ENCODE measurements at regions of chr22 and their contacts with region 1.

Region 1: DNA sequence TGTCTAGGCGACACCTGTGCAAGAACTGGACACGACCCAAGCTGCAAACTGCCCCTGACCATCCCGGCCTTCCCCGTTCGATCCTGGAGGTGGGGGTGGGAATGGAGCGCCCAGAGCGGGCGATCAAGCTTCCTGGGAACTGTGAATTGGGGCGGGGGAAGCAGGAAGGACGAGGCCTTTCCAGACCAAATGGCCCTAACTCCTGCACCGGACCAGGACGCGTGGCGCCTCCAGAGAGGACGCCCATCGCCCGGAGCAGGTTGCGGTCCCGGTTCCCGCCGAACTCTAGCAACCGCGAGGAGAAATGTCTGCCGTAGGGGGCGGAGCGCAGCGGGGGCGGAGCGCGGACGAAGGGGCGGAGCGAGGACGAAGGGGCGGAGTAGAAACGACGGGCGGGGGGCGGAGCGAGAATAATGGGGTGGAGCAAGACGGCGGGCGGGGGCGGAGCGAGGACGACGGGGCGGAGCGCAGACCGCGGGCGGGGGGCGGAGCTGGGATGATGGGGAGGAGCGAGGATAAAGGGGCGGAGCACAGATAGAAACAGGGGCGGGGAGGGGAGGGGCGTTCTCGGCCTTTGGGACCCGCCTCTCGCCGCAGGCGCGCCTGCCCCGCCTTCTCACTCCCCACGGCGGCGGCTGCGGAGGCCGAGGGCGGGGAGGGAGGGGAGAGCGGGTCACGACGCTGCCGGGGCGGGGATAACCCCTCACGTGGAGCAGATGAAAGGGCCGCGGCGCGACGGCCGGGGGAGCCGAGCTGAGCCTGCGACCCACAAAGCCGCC is at the start of gene ZNRF3:
- DNase-seq: peak; percentile 86
- ATAC-seq: peak; percentile 79
- H3K4me3 ChIP-seq: peak within 1 kb of the TSS; percentile 97
- H3K27ac ChIP-seq: peak within 1 kb of the TSS; percentile 82
- H3K4me1 ChIP-seq: peaks cover 47% of the 10 kb centered on the region
- H3K27me3 ChIP-seq: no peaks in the 10 kb centered on the region; a peak in 1 of 5 replicates
- CTCF ChIP-seq: 0 out of 2 replicates have a peak, but pooled peaks have one; percentile 17
- EP300 ChIP-seq: peak in 1 of 2 experiments; percentile 47; a peak in 1 of 4 replicates
- POLR2A ChIP-seq: peak; percentile 61 to 88; a peak in 3 of 4 replicates
- RAD21 ChIP-seq: 0 out of 2 replicates have a peak, but pooled peaks have one; percentile 24
- total RNA-seq, gene ZNRF3: 17.6 and 36.7 TPM in 2 replicates

Region 2: DNA sequence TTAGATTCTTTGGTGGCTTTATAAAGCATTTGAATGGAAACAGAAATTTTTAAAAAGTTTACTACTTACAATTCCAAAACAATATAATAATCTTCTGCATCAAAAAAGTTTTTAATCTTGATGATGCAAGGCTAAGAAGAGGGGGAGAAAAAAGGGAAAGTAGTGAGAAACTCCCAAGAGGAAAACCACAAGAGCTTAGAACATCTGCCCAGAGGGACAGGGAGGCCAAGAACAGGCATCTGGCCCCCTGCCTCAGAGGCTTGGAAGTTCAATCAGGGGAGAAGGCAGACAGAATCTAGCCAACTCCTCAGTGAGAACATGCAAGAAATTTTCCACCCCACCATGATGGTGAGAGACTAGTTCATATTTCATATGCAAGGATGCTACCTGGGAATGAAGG is 179.6 kb before region 1 on chr22:
- CTCF ChIA-PET with region 1: no interaction called
- POLR2A ChIA-PET with region 1: no interaction called
- in situ Hi-C with region 1: no loop called
- intact Hi-C with region 1: no loop called
- DNase-seq: no peak
- ATAC-seq: no peak
- H3K4me3 ChIP-seq: no peak overlapping the region
- H3K27ac ChIP-seq: no peak overlapping the region
- H3K4me1 ChIP-seq: no peaks in the 10 kb centered on the region
- H3K27me3 ChIP-seq: no peaks in the 10 kb centered on the region
- CTCF ChIP-seq: no peak
- EP300 ChIP-seq: no peak
- POLR2A ChIP-seq: no peak
- RAD21 ChIP-seq: no peak

Region 3: GRCh38 chr22:28864878-28865596 is 18.0 kb before region 1 on chr22:
- CTCF ChIA-PET with region 1: no interaction called
- POLR2A ChIA-PET with region 1: interaction called, 9 read pairs
- in situ Hi-C with region 1: no loop called
- intact Hi-C with region 1: loop called (anchors 2 kb)
- DNase-seq: peak; percentile 97
- ATAC-seq: peak; percentile 92
- H3K4me3 ChIP-seq: peak overlapping the region; percentile 42 to 65 (median 42); a peak in 5 of 6 replicates
- H3K27ac ChIP-seq: peak overlapping the region; percentile 84
- H3K4me1 ChIP-seq: peaks cover 64% of the 10 kb centered on the region
- H3K27me3 ChIP-seq: no peaks in the 10 kb centered on the region
- CTCF ChIP-seq: peak; percentile 16; the same call in 1 of the 2 replicates
- EP300 ChIP-seq: peak in 1 of 2 experiments; percentile 95; a peak in 2 of 4 replicates
- POLR2A ChIP-seq: peak; percentile 64 to 87; a peak in 2 of 4 replicates
- RAD21 ChIP-seq: no peak

Region 4: DNA sequence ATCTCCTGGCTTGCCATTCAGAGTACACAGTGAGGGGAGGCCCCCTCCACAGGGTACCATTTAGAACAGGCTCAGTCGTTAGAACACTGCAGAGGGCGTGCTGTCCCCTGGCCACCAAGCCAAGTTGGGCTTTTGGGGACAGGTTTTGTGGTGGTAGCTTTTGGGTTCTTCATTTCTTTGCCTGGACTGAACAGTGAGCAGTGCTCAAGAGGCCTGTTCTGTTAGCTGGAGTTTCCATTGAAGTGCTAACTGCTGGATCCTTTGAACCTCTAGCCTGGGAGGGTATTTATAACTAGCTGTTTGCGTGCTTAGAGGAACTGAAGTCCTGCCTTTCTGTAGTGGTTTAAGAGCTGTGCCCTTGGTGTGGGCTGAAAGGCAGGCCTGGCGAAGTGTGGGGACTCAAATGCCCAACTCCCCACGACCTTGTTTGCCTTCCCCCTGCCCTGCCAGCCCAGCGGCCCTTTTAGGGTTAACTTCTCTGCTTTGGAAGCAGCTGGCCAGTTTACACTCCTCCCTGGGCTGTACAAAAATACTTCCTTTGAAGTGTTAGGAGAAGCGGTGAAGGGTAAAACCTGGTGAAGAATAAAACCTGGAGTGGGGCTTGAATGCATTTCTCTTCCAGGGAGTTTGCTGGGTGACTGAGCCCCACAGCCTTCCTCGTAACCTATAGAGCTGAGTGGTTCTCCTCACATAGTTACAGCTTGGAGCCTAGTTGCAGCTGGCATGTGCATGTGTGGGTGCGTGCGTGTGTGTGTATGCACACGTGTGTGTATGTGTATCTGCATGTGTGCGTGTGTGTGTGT is 34.9 kb after region 1 on chr22:
- CTCF ChIA-PET with region 1: no interaction called
- POLR2A ChIA-PET with region 1: interaction called, 15 read pairs
- in situ Hi-C with region 1: no loop called
- intact Hi-C with region 1: loop called (anchors 5 kb)
- DNase-seq: peak; percentile 86
- ATAC-seq: peak; percentile 72
- H3K4me3 ChIP-seq: peak overlapping the region in 1 of 3 experiments; percentile 44; a peak in 2 of 6 replicates
- H3K27ac ChIP-seq: peak overlapping the region; percentile 81
- H3K4me1 ChIP-seq: peaks cover 100% of the 10 kb centered on the region
- H3K27me3 ChIP-seq: no peaks in the 10 kb centered on the region
- CTCF ChIP-seq: peak; percentile 23; the same call in 1 of the 2 replicates
- EP300 ChIP-seq: peak in 1 of 2 experiments; percentile 91; a peak in 2 of 4 replicates
- POLR2A ChIP-seq: 0 out of 4 replicates have a peak, but pooled peaks of 1 of the 2 experiments have one; percentile 18
- RAD21 ChIP-seq: 0 out of 2 replicates have a peak, but pooled peaks have one; percentile 37

Region 5: DNA sequence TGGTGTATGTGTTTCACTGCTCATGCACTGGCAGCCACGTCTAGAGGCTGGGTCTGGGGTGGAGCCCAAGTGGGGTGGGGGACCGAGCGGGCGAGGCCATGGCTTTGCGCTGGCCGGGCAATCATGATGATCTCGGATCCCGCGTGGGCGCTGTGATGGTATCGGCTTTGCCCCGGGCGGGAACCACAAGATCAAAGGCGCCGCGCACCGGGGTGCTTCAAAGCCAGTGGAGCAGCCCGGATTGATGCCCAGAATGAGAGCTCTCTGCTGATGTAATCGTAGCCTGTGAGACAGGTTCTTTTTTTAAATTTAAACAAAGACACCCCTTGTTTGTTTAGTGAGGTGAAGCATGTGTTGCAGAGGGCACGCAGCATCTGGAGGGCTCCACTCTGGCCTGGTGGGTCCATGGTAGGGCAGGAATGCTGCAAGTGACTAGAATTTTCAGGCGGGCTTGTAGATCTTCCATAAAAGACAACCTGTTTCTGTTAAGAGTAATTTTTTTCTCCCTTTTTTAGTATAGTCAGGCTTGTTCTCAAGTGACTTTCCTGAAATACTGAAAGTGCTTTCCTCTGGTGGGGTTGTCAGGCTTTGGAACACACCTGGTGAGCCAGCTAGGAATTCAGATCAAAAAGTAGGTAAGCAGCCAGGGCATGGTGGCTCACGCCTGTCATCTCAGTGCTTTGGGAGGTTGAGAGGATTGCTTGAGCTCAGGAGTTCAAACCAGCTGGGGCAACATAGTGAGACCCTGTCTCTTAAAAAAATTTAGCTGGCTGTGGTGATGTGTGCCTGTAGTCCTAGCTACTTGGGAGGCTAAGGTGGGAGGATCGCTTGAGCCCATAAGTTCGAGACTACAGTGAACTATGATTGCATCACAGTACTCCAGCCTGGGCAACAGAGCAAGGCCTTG is 41.0 kb after region 1 on chr22:
- CTCF ChIA-PET with region 1: no interaction called
- POLR2A ChIA-PET with region 1: interaction called, 15 read pairs
- in situ Hi-C with region 1: no loop called
- intact Hi-C with region 1: loop called (anchors 5 kb)
- DNase-seq: peak; percentile 98
- ATAC-seq: peak; percentile 76
- H3K4me3 ChIP-seq: peak overlapping the region in 1 of 3 experiments; percentile 29; a peak in 2 of 6 replicates
- H3K27ac ChIP-seq: peak overlapping the region; percentile 96
- H3K4me1 ChIP-seq: peaks cover 99% of the 10 kb centered on the region
- H3K27me3 ChIP-seq: no peaks in the 10 kb centered on the region
- CTCF ChIP-seq: no peak
- EP300 ChIP-seq: peak; percentile 67 to 98; a peak in 3 of 4 replicates
- POLR2A ChIP-seq: no peak
- RAD21 ChIP-seq: peak; percentile 48; the same call in 1 of the 2 replicates

Region 6: GRCh38 chr22:29040385-29041275 is 157.6 kb after region 1 on chr22:
- CTCF ChIA-PET with region 1: no interaction called
- POLR2A ChIA-PET with region 1: interaction called, 22 read pairs
- in situ Hi-C with region 1: no loop called
- intact Hi-C with region 1: no loop called
- DNase-seq: peak; percentile 65
- ATAC-seq: peak; percentile 65
- H3K4me3 ChIP-seq: no peak overlapping the region
- H3K27ac ChIP-seq: no peak overlapping the region
- H3K4me1 ChIP-seq: peaks cover 87% of the 10 kb centered on the region
- H3K27me3 ChIP-seq: no peaks in the 10 kb centered on the region
- CTCF ChIP-seq: peak; percentile 86
- EP300 ChIP-seq: no peak
- POLR2A ChIP-seq: no peak
- RAD21 ChIP-seq: peak; percentile 88

Region 7: GRCh38 chr22:29443452-29443851 is 560.4 kb after region 1 on chr22:
- CTCF ChIA-PET with region 1: no interaction called
- POLR2A ChIA-PET with region 1: no interaction called
- in situ Hi-C with region 1: no loop called
- intact Hi-C with region 1: no loop called
- DNase-seq: no peak
- ATAC-seq: no peak
- H3K4me3 ChIP-seq: no peak overlapping the region
- H3K27ac ChIP-seq: no peak overlapping the region
- H3K4me1 ChIP-seq: no peaks in the 10 kb centered on the region
- H3K27me3 ChIP-seq: peaks cover 0 to 12% of the 10 kb centered on the region in 2 experiments; a peak in 1 of 5 replicates
- CTCF ChIP-seq: no peak
- EP300 ChIP-seq: no peak
- POLR2A ChIP-seq: no peak
- RAD21 ChIP-seq: no peak

Measured in HepG2 (cell line).